Mucosa of descending colon (tissue), 3 donors: ENCODE measurements at regions of chr17 and their contacts with region 1.

Region 1: GRCh38 chr17:48878918-48879898 is 13.4 kb upstream of the ATP5MC1 start:
- DNase-seq: peak in 1 of 3 donors; percentile 72
- ATAC-seq: peak; percentile 92
- H3K4me3 ChIP-seq: no peak overlapping the region
- H3K4me1 ChIP-seq: peaks cover 8% of the 10 kb centered on the region
- CTCF ChIP-seq: peak; percentile 80

Region 2: GRCh38 chr17:48678141-48678971 is 200.9 kb before region 1 on chr17:
- intact Hi-C with region 1: loop called (anchors 5 to 10 kb)
- DNase-seq: peak; percentile 74 to 86 (median 85)
- ATAC-seq: peak; percentile 96
- H3K4me3 ChIP-seq: no peak overlapping the region
- H3K4me1 ChIP-seq: peaks cover 11% of the 10 kb centered on the region
- CTCF ChIP-seq: peak; percentile 95

Region 3: DNA sequence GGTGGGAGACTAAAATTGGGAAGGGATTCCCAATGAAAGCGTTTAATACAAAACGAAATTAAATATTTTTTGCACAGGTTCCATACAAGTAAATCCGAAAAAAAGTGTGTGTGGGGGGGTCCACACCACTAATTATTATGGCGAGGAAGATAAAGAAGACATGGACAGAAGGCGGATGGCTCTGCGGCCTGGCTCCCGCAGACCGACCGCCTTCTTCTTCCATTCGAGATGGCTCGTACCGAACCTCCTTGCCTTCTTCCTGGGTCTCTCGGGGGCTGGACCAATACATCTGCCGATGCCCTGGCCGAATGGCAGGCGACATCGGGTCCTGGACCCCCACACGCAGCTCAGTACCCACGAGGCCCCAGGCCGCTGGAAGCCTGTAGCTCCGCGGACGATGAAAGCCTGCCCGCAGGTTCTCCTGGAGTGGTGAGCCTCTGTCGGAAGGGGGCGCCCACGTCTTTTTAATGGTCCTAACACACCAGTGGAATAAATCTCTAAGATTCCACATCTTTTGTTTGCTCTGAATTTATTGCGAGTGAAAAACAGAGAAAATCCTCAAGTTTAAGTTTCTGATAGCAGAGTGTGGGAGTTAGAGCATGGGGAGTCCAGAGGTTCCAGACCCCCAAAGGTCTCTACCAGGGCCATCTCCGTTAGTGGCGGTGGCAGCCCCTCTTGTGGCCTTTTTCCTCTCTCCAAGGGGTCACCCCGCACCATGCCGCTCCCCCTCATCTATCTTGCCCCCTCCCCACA is 154.8 kb before region 1 on chr17:
- intact Hi-C with region 1: loop called in 1 of 2 experiments (anchors 5 kb)
- DNase-seq: peak; percentile 91 to 98 (median 95)
- ATAC-seq: peak; percentile 40
- H3K4me3 ChIP-seq: no peak overlapping the region
- H3K4me1 ChIP-seq: peaks cover 20% of the 10 kb centered on the region
- CTCF ChIP-seq: peak; percentile 57

Region 4: DNA sequence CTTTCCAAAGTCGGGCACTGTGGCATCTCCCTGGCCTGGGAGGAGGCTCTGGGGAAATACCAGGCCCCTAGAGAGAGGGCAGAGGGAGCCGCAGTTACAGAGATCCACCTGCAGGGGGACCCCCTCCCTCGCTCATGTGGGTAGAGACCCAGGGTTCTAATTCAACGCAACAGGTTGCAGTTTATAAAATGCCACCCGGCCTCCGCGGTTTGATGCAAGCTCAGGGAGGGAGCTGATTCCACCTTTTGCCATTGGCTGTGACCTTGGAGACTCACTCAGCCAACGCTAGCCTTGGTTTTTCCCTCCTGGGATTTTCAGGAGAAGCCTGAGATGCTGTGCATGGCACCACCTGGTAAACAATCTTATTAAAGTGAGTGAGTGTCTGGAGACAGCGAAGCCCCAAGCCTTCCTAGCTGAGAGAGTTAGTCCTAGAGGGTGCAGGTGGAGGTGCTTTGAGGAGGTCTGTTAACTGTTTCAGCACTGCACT is 74.2 kb before region 1 on chr17:
- intact Hi-C with region 1: loop called (anchors 2 to 5 kb)
- DNase-seq: peak; percentile 67 to 88 (median 83)
- ATAC-seq: peak; percentile 75
- H3K4me3 ChIP-seq: no peak overlapping the region
- H3K4me1 ChIP-seq: peaks cover 41% of the 10 kb centered on the region
- CTCF ChIP-seq: peak; percentile 91

Region 5: GRCh38 chr17:48944519-48945260 is 65.5 kb after region 1 on chr17 and contains the start of gene SNF8:
- intact Hi-C with region 1: no loop called
- DNase-seq: peak; percentile 94 to 96 (median 95)
- ATAC-seq: peak; percentile 100
- H3K4me3 ChIP-seq: peak within 1 kb of the TSS; percentile 76
- H3K4me1 ChIP-seq: peaks cover 8% of the 10 kb centered on the region
- CTCF ChIP-seq: no peak
- total RNA-seq, gene SNF8: 90.3 to 112 (median 101) TPM